Right ventricle myocardium inferior (tissue), 1 donor: ENCODE measurements at regions of chr19 and their contacts with region 1.

Region 1: GRCh38 chr19:6066661-6067646 is 43.3 kb downstream of the RFX2 start:
- DNase-seq: peak; percentile 98
- ATAC-seq: peak; percentile 84

Region 2: DNA sequence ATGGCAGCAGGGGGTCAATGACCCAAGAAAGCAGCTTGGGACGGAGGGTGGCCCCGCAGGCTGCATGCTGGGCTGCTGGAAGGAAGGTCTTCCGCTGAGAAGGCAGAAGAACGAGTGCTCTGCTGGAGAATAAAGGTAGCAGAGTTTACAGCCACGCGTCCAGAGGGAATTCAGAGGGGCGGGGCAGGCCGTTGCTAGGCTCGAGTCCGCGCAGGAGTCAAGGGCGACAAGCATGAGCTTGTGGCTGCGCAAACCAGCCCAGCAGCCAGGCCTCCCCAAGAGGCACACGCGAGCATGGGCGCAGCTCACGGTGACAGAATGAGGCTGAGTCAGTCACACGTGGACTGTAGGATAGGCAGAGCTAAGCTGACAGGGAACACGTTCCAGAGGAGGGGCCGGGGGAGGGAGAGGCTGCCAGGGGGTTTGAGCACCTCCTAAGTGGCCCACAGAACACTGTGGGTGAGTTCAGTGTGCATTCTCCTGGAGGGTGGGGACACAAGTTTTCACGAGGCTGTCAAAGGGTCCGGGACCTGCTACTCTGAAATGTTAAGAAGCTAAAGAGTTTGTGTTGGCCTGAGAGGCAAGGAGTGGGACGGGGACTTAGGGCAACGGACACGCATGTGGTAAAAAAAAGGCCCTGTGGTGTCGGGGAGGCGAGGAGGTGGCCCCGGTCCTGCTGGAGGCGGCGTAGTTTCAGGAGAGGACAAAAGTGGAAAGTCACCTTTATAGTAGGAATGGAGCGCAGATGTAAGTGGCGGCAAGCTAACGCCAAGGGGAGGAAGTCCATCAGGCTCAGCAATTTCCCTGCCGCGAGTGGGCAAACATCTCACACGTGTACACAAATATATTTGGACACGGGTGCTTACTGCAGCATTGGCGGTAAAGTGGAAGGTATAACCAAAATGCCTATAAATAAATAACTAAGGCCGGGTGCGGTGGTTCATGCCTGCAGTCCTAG is 25.7 kb after region 1 on chr19:
- intact Hi-C with region 1: loop called (anchors 1 kb)
- DNase-seq: peak; percentile 89
- ATAC-seq: peak; percentile 91

Region 3: GRCh38 chr19:6110360-6110977 is 43.5 kb after region 1 on chr19 and contains the start of gene RFX2:
- intact Hi-C with region 1: loop called (anchors 2 kb)
- DNase-seq: peak; percentile 99
- ATAC-seq: peak; percentile 99
- total RNA-seq, gene RFX2: 5.4 TPM

Region 4: DNA sequence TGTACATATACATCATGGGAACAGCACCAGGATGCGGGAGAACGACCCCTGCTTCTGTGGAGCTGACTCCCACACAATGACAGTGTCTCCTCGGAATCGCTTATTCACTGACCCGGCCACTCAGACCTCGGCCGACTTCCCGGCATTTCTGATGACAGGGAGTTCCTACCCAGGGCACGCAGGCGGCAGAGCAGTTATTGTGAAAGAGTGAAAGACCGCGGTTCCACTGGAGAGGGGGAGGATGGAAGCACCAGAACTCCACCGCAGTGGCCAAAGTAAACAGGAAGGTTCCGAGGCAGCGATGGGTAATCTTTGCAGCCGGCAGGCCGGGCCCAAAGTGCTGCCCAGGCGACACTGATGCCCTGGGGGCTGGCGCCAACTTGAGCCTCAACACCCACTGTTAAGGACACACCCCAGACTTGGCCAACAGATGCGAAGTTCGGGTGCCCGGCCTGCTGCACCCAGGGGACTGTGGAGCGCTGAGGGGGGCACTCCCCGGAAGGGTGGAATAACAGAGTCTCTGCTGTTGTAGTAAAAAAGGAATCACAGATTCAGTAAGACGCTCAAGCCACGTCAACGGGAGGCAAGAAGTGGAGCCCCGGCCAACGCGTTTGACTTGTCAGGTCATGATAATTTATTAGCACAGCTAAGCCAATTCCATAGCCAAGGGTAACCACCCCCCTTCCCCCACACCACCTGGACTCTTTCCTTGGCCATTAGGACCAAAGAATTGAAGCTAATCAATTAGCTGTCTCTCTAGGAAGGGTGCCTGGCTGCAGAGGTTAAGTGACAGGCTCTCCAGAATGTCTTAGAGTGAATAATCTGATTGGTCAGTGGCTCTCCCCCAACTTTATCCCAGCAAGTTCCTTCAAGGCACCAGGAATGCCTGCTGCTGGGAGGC is 207.0 kb after region 1 on chr19:
- intact Hi-C with region 1: loop called (anchors 1 kb)
- DNase-seq: peak; percentile 94
- ATAC-seq: peak; percentile 81